WTC11 (cell line): ENCODE measurements at regions of chr11 and their contacts with region 1.

Region 1: GRCh38 chr11:57480409-57481137 is 20.2 kb downstream of the RTN4RL2 start:
- DNase-seq: peak; percentile 93
- ATAC-seq: peak; percentile 60
- H3K4me3 Mint-ChIP-seq: no peak overlapping the region
- H3K27ac Mint-ChIP-seq: 0 out of 2 replicates have a peak overlapping the region, but pooled peaks have one; percentile 14
- H3K4me1 Mint-ChIP-seq: peaks cover 56% of the 10 kb centered on the region
- H3K27me3 Mint-ChIP-seq: peaks cover 74% of the 10 kb centered on the region
- CTCF ChIP-seq: peak; percentile 73

Region 2: GRCh38 chr11:57144075-57144474 is 336.5 kb before region 1 on chr11:
- CTCF ChIA-PET with region 1: no interaction called
- POLR2A ChIA-PET with region 1: no interaction called
- DNase-seq: no peak
- ATAC-seq: peak; percentile 78
- H3K4me3 Mint-ChIP-seq: no peak overlapping the region
- H3K27ac Mint-ChIP-seq: no peak overlapping the region
- H3K4me1 Mint-ChIP-seq: 0 out of 2 replicates have a peak, but pooled peaks cover 4% of the 10 kb centered on the region
- H3K27me3 Mint-ChIP-seq: no peaks in the 10 kb centered on the region; the same call in 1 of the 2 replicates
- CTCF ChIP-seq: no peak

Region 3: GRCh38 chr11:57374966-57375365 is 105.6 kb before region 1 on chr11:
- CTCF ChIA-PET with region 1: no interaction called
- POLR2A ChIA-PET with region 1: no interaction called
- DNase-seq: no peak
- ATAC-seq: no peak
- H3K4me3 Mint-ChIP-seq: no peak overlapping the region
- H3K27ac Mint-ChIP-seq: no peak overlapping the region
- H3K4me1 Mint-ChIP-seq: peaks cover 2% of the 10 kb centered on the region; the same call in 1 of the 2 replicates
- H3K27me3 Mint-ChIP-seq: peaks cover 23% of the 10 kb centered on the region
- CTCF ChIP-seq: no peak

Region 4: GRCh38 chr11:57463671-57464538 is 16.7 kb before region 1 on chr11:
- CTCF ChIA-PET with region 1: interaction called, 260 read pairs
- POLR2A ChIA-PET with region 1: interaction called, 6 read pairs
- DNase-seq: peak; percentile 27
- ATAC-seq: no peak
- H3K4me3 Mint-ChIP-seq: no peak overlapping the region
- H3K27ac Mint-ChIP-seq: no peak overlapping the region
- H3K4me1 Mint-ChIP-seq: peaks cover 52% of the 10 kb centered on the region
- H3K27me3 Mint-ChIP-seq: peaks cover 43% of the 10 kb centered on the region
- CTCF ChIP-seq: no peak